HEK293 (cell line): ENCODE measurements at regions of chr3 and their contacts with region 1.

Region 1: GRCh38 chr3:2536575-2536974 is 437.9 kb downstream of the CNTN4 start:
- H3K4me3 ChIP-seq: no peak overlapping the region
- H3K27ac ChIP-seq: no peak overlapping the region
- H3K4me1 ChIP-seq: no peaks in the 10 kb centered on the region
- CTCF ChIP-seq: no peak

Region 2: DNA sequence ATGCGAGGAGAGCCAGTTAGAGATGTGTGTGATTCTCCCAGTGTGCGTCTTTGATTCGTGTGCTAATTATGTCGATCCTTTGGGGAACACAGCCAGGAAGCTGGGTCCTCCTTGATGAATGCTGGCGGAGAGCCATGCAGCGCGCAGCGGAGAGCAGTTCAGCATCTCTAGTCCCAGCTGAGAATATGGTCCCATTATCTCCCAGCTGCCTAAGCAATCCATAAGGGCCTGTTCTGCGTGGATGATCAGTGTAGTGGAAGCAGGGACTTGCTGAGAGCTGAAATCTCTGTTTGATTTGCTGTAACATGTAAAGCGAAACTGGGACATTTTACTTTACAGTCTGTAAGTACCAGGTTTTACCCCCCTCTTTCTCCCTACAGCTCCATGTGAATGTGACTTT is 25.2 kb before region 1 on chr3:
- CTCF ChIA-PET with region 1: interaction called, 6 read pairs
- POLR2A ChIA-PET with region 1: interaction called, 11 read pairs
- H3K4me3 ChIP-seq: no peak overlapping the region
- H3K27ac ChIP-seq: no peak overlapping the region
- H3K4me1 ChIP-seq: no peaks in the 10 kb centered on the region
- CTCF ChIP-seq: no peak

Region 3: DNA sequence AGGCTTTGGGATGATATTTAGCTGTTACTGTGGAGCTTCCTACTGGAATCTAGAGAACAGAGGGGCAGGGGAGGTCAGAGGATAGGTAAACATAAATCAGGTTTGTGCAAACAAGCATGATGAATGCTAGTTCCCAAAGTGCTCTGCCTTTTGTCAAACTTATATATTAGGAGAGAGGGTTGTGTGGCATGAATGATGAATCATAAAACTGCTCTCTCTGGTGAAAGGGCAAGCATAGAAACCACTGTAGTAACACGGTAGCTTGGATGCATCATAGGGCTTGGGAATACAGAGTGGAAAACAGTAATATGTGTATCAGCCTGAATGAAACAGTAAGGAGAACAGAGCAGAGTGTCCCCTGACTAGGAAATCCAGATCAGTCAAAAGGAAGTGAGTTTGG is 86.9 kb after region 1 on chr3:
- CTCF ChIA-PET with region 1: no interaction called
- POLR2A ChIA-PET with region 1: no interaction called
- H3K4me3 ChIP-seq: no peak overlapping the region
- H3K27ac ChIP-seq: no peak overlapping the region
- H3K4me1 ChIP-seq: no peaks in the 10 kb centered on the region
- CTCF ChIP-seq: no peak